ENCODE measurements at regions of chr13 and their contacts with region 1.

Region 1: DNA sequence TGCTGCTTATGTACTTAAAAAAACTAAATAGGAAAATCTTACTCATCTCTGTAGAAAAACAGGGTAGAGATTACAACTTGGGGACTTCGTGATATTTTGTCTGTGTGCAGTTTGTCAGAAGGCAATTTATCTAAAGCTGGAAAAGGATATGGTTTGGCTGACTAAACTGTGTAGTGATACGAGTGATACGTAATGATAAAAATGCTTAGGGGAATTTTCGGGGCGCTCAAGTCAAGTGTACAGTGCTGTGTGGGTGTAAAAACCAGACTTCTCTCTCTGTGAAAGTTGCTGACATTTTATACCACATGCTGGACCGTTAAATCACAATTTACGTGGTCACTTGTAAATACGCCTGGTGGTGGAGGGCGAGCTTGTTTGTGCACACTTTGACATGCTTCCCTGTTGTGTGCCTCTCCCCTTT is 221.7 kb downstream of the KCNRG start:
- DNase-seq: peak in 5 of 9 experiments; percentile 4 to 82 (median 37)
- ATAC-seq: peak; percentile 86
- H3K4me3 ChIP-seq: peak overlapping the region in 1 of 2 experiments; percentile 2
- H3K4me3 Mint-ChIP-seq: peak overlapping the region; percentile 83
- H3K27ac ChIP-seq: peak overlapping the region; percentile 15 to 64
- H3K27ac Mint-ChIP-seq: peak overlapping the region; percentile 75
- H3K4me1 ChIP-seq: peaks cover 4% of the 10 kb centered on the region
- H3K4me1 Mint-ChIP-seq: peaks cover 17% of the 10 kb centered on the region
- H3K27me3 ChIP-seq: no peaks in the 10 kb centered on the region
- H3K27me3 Mint-ChIP-seq: no peaks in the 10 kb centered on the region
- CTCF ChIP-seq: no peak

Region 2: GRCh38 chr13:50131920-50132903 is 104.7 kb before region 1 on chr13:
- CTCF ChIA-PET with region 1: no interaction called
- POLR2A ChIA-PET with region 1: no interaction called
- intact Hi-C with region 1: no loop called
- DNase-seq: peak in 3 of 9 experiments; percentile 22 to 44 (median 25)
- ATAC-seq: no peak
- H3K4me3 ChIP-seq: no peak overlapping the region
- H3K4me3 Mint-ChIP-seq: peak overlapping the region; percentile 30
- H3K27ac ChIP-seq: no peak overlapping the region
- H3K27ac Mint-ChIP-seq: no peak overlapping the region
- H3K4me1 ChIP-seq: peaks cover 43% of the 10 kb centered on the region
- H3K4me1 Mint-ChIP-seq: peaks cover 37% of the 10 kb centered on the region
- H3K27me3 ChIP-seq: peaks cover 55 to 56% of the 10 kb centered on the region in 2 experiments
- H3K27me3 Mint-ChIP-seq: peaks cover 60% of the 10 kb centered on the region
- CTCF ChIP-seq: no peak

Region 3: GRCh38 chr13:50255639-50256038 is 18.7 kb after region 1 on chr13:
- CTCF ChIA-PET with region 1: interaction called, 3 read pairs
- POLR2A ChIA-PET with region 1: no interaction called
- intact Hi-C with region 1: loop called in 1 of 2 experiments (anchors 2 kb)
- DNase-seq: peak in 2 of 9 experiments; percentile 54 to 74
- ATAC-seq: peak; percentile 57
- H3K4me3 ChIP-seq: no peak overlapping the region
- H3K4me3 Mint-ChIP-seq: no peak overlapping the region
- H3K27ac ChIP-seq: no peak overlapping the region
- H3K27ac Mint-ChIP-seq: no peak overlapping the region
- H3K4me1 ChIP-seq: peaks cover 11% of the 10 kb centered on the region
- H3K4me1 Mint-ChIP-seq: peaks cover 41% of the 10 kb centered on the region
- H3K27me3 ChIP-seq: no peaks in the 10 kb centered on the region
- H3K27me3 Mint-ChIP-seq: no peaks in the 10 kb centered on the region
- CTCF ChIP-seq: no peak

Region 4: GRCh38 chr13:50365408-50366391 is 128.8 kb after region 1 on chr13:
- CTCF ChIA-PET with region 1: no interaction called
- POLR2A ChIA-PET with region 1: no interaction called
- intact Hi-C with region 1: loop called in 1 of 2 experiments (anchors 10 kb)
- DNase-seq: peak in 5 of 9 experiments; percentile 22 to 72 (median 51)
- ATAC-seq: peak; percentile 80
- H3K4me3 ChIP-seq: peak overlapping the region in 1 of 2 experiments; percentile 23
- H3K4me3 Mint-ChIP-seq: peak overlapping the region; percentile 70
- H3K27ac ChIP-seq: peak overlapping the region; percentile 21 to 80
- H3K27ac Mint-ChIP-seq: peak overlapping the region; percentile 88
- H3K4me1 ChIP-seq: peaks cover 5% of the 10 kb centered on the region
- H3K4me1 Mint-ChIP-seq: peaks cover 37% of the 10 kb centered on the region
- H3K27me3 ChIP-seq: no peaks in the 10 kb centered on the region
- H3K27me3 Mint-ChIP-seq: no peaks in the 10 kb centered on the region
- CTCF ChIP-seq: no peak